ENCODE measurements at regions of chr2 and their contacts with region 1.

Region 1: DNA sequence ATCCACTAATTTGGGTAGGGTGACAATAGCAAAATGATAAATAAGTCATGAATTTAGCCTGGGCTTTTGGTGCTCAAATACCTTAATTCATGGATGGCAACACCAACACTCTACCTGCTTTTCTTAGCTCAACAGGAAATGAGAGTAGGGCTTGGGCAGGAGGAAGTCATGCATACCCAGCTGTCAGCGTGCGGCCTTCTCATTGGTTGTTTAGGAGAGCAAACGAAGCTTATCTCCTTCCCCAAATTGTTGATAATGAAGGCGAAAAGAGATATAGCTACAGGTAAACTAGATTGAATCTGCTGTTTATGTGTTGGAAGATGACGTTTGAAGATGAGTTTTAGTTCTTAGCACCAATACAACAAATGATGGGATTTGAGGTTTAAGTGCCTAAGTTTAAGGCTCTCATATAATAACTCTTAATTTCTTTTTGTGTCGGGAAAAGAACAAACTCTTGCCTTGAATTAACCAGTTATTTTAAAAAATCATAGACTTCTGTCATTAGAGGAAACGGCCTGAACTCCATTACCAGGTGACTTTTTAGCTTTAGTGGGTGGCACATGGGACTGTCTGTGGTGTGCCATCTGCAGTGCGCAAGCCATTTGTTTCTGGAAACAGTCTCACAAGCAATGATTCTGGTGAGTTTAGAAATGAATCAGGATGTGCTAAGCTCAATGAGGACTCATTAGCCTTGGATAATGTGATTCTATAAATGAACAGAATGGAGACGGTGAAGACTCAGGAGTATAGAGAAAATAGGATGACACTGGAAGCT is 19.8 kb downstream of the MAP4K4 start:
- DNase-seq: peak in 7 of 9 donors; percentile 58 to 74 (median 65)
- ATAC-seq: peak; percentile 72
- H3K4me3 ChIP-seq: peak overlapping the region; percentile 22
- H3K4me3 Mint-ChIP-seq: peak overlapping the region; percentile 39 to 83 (median 76)
- H3K27ac ChIP-seq: peak overlapping the region; percentile 64
- H3K27ac Mint-ChIP-seq: peak overlapping the region in 8 of 9 donors; percentile 76 to 98 (median 96)
- H3K4me1 ChIP-seq: peaks cover 53 to 74% of the 10 kb centered on the region in 2 donors
- H3K4me1 Mint-ChIP-seq: peaks cover 56 to 92% (median 83%) of the 10 kb centered on the region in 7 donors
- H3K27me3 ChIP-seq: no peaks in the 10 kb centered on the region
- H3K27me3 Mint-ChIP-seq: no peaks in the 10 kb centered on the region

Region 2: DNA sequence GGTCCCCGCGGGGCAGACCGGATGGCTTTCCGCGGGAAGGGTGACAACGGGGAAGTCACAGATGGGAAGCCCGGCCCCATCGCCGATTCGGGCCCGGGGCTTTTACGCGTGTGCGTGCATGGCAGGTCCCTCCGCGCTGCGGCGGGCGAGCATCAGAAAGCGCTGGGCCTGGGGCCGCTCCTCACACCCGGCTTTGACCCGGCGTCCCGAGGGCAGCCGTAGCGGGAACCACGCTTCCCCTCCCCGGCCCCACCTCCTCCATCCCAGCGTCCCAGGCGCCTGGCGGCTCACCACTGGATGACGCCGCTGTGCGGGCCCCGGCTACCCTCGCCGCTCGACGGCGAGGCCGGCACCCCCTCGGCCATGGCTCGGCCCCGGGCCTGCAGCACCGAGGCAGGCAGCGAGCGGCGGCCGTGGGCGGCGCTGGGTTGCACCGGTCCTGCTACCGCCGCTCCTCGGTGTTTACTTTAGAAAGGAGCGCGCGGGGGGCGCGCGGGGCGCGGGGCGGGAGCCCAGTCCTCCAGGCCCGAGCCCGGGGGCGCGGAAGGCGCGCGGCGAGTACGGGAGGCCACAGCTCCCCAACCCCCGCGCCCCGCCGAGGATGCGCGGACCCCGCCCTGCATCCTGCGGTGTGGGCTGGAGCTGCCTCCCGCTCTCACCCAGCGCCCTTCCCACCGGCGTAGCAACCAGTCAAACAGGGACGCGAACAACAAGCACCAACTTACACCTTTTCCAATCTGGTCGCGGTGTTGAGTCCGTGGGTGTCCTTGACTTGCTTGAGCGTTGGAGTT is 243.2 kb before region 1 on chr2:
- CTCF ChIA-PET with region 1: no interaction called
- POLR2A ChIA-PET with region 1: no interaction called
- intact Hi-C with region 1: loop called in 1 of 2 experiments (anchors 5 kb)
- DNase-seq: peak; percentile 7 to 70 (median 20)
- ATAC-seq: peak; percentile 46
- H3K4me3 ChIP-seq: peak overlapping the region; percentile 48
- H3K4me3 Mint-ChIP-seq: peak overlapping the region; percentile 81 to 90 (median 85)
- H3K27ac ChIP-seq: no peak overlapping the region
- H3K27ac Mint-ChIP-seq: peak overlapping the region in 5 of 9 donors; percentile 36 to 92 (median 73)
- H3K4me1 ChIP-seq: peaks cover 0 to 6% of the 10 kb centered on the region in 2 donors
- H3K4me1 Mint-ChIP-seq: peaks cover 6 to 50% (median 11%) of the 10 kb centered on the region in 7 donors
- H3K27me3 ChIP-seq: no peaks in the 10 kb centered on the region
- H3K27me3 Mint-ChIP-seq: peaks cover 0 to 7% (median 0%) of the 10 kb centered on the region in 5 donors

Region 3: GRCh38 chr2:101704046-101704466 is 13.2 kb before region 1 on chr2:
- CTCF ChIA-PET with region 1: interaction called, 12 read pairs
- POLR2A ChIA-PET with region 1: interaction called, 47 read pairs
- intact Hi-C with region 1: loop called (anchors 1 to 2 kb)
- DNase-seq: peak in 7 of 9 donors; percentile 37 to 64 (median 57)
- ATAC-seq: peak; percentile 48
- H3K4me3 ChIP-seq: peak overlapping the region; percentile 50
- H3K4me3 Mint-ChIP-seq: peak overlapping the region in 7 of 10 donors; percentile 71 to 88 (median 86)
- H3K27ac ChIP-seq: peak overlapping the region; percentile 52
- H3K27ac Mint-ChIP-seq: peak overlapping the region in 4 of 9 donors; percentile 89 to 96 (median 93)
- H3K4me1 ChIP-seq: peaks cover 68 to 77% of the 10 kb centered on the region in 2 donors
- H3K4me1 Mint-ChIP-seq: peaks cover 0 to 83% (median 48%) of the 10 kb centered on the region in 7 donors
- H3K27me3 ChIP-seq: no peaks in the 10 kb centered on the region
- H3K27me3 Mint-ChIP-seq: no peaks in the 10 kb centered on the region

Region 4: DNA sequence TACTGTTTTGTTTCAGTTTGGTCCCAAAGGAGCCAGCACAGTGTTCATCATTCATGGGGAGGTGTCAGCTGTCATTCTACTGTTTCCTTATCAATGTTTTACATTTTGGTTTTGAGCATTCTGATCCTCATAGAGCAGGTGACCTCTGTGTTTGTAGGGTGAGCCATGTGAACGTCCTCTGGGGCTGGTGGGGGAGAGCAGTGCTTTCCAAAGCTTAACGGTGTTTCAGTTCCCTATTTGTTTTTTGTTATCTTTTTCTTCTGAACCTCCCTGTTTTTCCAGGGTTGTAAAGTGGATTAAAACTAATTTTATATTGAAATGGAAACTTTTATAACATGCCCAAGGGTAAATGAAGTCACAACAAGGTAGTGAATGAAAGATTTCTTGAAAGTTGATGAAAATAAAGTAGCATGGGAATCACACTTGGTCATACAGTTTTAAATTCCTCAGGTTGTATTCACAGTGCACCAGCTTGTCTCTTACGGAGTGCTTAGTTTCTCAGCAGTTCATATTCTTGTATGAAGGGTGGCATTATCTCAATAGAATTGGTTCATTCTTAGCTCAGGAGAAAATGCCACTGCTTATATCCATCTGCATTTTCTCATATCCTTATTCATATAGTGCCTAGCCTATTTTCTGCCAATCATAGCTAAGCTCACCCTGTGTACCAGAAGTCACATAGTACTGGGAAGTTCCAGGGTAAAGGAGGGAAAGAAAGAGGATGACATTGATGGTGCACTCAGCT is 34.8 kb after region 1 on chr2:
- CTCF ChIA-PET with region 1: interaction called, 3 read pairs
- POLR2A ChIA-PET with region 1: interaction called, 5 read pairs
- intact Hi-C with region 1: loop called in 1 of 2 experiments (anchors 5 kb)
- DNase-seq: no peak
- ATAC-seq: peak; percentile 55
- H3K4me3 ChIP-seq: no peak overlapping the region
- H3K4me3 Mint-ChIP-seq: peak overlapping the region in 7 of 10 donors; percentile 9 to 69 (median 42)
- H3K27ac ChIP-seq: no peak overlapping the region
- H3K27ac Mint-ChIP-seq: peak overlapping the region in 6 of 9 donors; percentile 1 to 43 (median 24)
- H3K4me1 ChIP-seq: peaks cover 0 to 38% of the 10 kb centered on the region in 2 donors
- H3K4me1 Mint-ChIP-seq: peaks cover 59 to 82% (median 77%) of the 10 kb centered on the region in 7 donors
- H3K27me3 ChIP-seq: no peaks in the 10 kb centered on the region
- H3K27me3 Mint-ChIP-seq: no peaks in the 10 kb centered on the region

Region 5: GRCh38 chr2:101770726-101771125 is 53.5 kb after region 1 on chr2:
- CTCF ChIA-PET with region 1: no interaction called
- POLR2A ChIA-PET with region 1: interaction called, 4 read pairs
- intact Hi-C with region 1: loop called (anchors 5 kb)
- DNase-seq: no peak
- ATAC-seq: peak; percentile 48
- H3K4me3 ChIP-seq: no peak overlapping the region
- H3K4me3 Mint-ChIP-seq: peak overlapping the region in 8 of 10 donors; percentile 48 to 79 (median 73)
- H3K27ac ChIP-seq: no peak overlapping the region
- H3K27ac Mint-ChIP-seq: peak overlapping the region in 7 of 9 donors; percentile 14 to 90 (median 59)
- H3K4me1 ChIP-seq: peaks cover 20 to 79% of the 10 kb centered on the region in 2 donors
- H3K4me1 Mint-ChIP-seq: peaks cover 73 to 98% (median 95%) of the 10 kb centered on the region in 7 donors
- H3K27me3 ChIP-seq: no peaks in the 10 kb centered on the region
- H3K27me3 Mint-ChIP-seq: no peaks in the 10 kb centered on the region